ENCODE measurements at regions of chr1 and their contacts with region 1.

Region 1: GRCh38 chr1:110312188-110313121 is 26.7 kb upstream of the RBM15 start:
- DNase-seq: peak; percentile 71
- CTCF ChIP-seq: peak; percentile 91

Region 2: GRCh38 chr1:110196917-110197765 is 115.3 kb before region 1 on chr1:
- CTCF ChIA-PET with region 1: interaction called, 204 read pairs
- POLR2A ChIA-PET with region 1: no interaction called
- DNase-seq: peak; percentile 88
- CTCF ChIP-seq: peak; percentile 95

Region 3: DNA sequence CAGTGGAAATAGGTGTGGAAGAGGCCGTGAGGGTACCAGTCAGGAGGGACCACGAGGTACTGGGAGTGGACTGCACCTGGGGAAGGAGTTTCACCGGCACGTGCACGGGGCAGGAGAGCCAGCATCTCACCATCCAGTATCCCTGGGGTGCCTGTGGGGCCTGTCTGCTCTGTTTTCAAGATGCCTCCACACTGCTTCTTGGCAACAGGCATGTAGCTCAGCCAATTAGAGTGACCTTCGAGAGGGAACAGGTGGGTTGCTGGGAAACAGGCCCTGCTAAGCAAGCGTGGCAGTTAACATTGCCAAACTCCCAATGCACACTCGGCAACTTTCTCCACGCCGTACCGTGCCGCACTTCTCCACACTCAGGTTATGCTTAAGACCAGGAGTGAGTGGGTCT is 84.7 kb before region 1 on chr1:
- CTCF ChIA-PET with region 1: interaction called, 14 read pairs
- POLR2A ChIA-PET with region 1: no interaction called
- DNase-seq: no peak
- CTCF ChIP-seq: no peak

Region 4: GRCh38 chr1:110264430-110264829 is 48.0 kb before region 1 on chr1:
- CTCF ChIA-PET with region 1: no interaction called
- POLR2A ChIA-PET with region 1: no interaction called
- DNase-seq: no peak
- CTCF ChIP-seq: no peak

Region 5: DNA sequence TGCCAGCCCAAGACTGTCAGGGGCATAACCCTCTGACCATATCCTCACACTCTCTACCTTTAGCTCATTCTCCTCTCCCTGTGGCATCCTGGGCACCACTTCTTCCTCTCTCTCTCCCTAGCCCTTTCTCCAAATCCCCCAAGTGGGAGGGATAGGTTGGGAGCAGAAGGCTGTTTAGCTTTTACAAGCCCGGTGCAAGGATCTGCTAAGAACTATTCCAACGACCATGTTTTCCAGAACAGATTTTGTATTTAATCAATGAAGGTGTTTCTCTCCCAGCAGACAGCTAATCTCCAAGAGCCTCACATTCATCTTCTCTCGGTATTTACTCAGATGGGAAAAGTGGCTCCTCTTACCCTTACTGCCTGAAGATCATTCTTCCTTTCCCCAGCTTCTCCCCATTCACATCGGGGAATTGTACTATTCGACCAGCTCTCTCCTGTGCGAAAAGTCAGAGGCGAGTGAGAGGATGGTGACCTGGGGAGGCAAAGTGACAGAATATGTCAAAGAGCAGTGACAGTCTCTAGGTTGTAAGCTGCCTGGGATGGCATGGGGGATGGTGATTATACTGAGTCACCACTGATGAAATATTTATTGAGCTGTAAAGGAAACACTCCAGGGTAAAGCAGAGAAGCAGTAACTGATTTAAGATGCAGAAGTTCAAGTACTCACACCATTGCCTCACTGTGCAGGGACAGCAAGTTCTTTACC is 20.3 kb before region 1 on chr1:
- CTCF ChIA-PET with region 1: interaction called, 10 read pairs
- POLR2A ChIA-PET with region 1: no interaction called
- DNase-seq: no peak
- CTCF ChIP-seq: no peak

Region 6: GRCh38 chr1:110328274-110328673 is 15.8 kb after region 1 on chr1:
- CTCF ChIA-PET with region 1: interaction called, 20 read pairs
- POLR2A ChIA-PET with region 1: no interaction called
- DNase-seq: no peak
- CTCF ChIP-seq: no peak

Region 7: DNA sequence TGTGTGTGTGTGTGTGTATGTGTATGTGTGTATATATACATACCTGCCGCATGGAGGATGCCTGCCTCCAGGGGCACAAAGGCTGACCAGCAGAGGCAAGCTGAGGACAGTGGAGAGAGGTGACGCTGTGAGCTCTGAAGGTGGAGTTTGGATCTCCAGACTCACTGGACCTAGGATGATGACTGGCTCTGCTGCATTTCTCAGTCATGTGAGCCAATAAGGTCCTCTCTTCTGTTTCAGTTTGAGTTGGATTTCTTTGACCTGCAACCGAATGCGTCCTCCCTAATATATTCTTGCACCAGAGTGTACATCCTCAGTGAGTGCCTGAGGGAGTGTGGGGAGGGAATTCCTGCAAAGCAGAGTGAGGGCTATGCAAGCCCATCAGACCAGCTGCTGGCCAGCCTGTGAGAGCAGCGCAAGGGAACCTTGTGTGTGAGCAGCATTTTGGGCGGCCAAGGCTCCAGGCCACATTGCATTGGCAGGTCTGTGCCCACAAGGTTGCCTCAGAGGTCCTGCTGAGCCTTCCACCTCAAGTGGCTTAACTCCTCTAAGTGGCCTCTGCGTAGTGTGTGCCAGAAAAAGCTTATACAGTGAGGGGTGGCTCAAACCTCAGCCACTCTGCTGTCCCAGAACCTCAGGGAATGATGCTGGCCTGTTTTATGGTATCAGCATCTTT is 197.8 kb after region 1 on chr1:
- CTCF ChIA-PET with region 1: no interaction called
- POLR2A ChIA-PET with region 1: no interaction called
- DNase-seq: no peak
- CTCF ChIP-seq: no peak

Region 8: GRCh38 chr1:110657351-110657750 is 344.9 kb after region 1 on chr1:
- CTCF ChIA-PET with region 1: no interaction called
- POLR2A ChIA-PET with region 1: no interaction called
- DNase-seq: no peak
- CTCF ChIP-seq: no peak

Measured in GM10248 (cell line).